Left colon (tissue), 2 donors: ENCODE measurements at regions of chr16 and their contacts with region 1.

Region 1: GRCh38 chr16:10743610-10744393 is at the start of gene NUBP1:
- DNase-seq: peak; percentile 99
- ATAC-seq: peak; percentile 97
- total RNA-seq, gene NUBP1: 24.2 to 29.3 TPM

Region 2: GRCh38 chr16:10918294-10919002 is 174.6 kb after region 1 on chr16:
- intact Hi-C with region 1: loop called in 1 of 2 experiments (anchors 10 kb)
- DNase-seq: peak; percentile 82 to 93
- ATAC-seq: peak; percentile 92